ENCODE measurements at regions of chr2 and their contacts with region 1.

Region 1: GRCh38 chr2:216603010-216603883 is 30.0 kb upstream of the IGFBP2 start:
- DNase-seq: no peak
- ATAC-seq: no peak
- H3K4me3 ChIP-seq: no peak overlapping the region
- H3K27ac ChIP-seq: no peak overlapping the region
- H3K4me1 ChIP-seq: peaks cover 0 to 6% (median 0%) of the 10 kb centered on the region in 12 donors
- H3K27me3 ChIP-seq: peaks cover 0 to 2% (median 0%) of the 10 kb centered on the region in 9 donors
- CTCF ChIP-seq: no peak
- POLR2A ChIP-seq: no peak

Region 2: DNA sequence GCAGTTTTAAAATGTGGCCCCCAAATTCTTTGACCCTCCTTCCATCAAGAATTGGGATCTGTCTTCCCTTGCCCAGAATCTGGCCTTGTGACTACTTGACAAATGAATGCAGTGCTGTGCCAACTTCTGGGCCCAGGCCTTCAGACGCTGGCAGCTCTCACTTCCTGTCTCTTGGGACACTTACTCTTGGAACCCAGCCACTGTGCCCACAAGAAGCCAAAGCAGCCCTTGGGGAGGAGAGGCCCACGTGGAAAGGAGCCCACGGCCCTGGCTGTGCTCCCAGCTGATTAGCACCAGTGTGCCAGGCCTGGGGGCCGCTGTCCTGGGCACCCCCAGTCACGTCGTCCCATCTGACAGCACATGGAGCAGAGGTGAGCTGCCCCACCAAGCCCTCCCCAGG is 48.0 kb before region 1 on chr2:
- intact Hi-C with region 1: no loop called
- DNase-seq: peak; percentile 70 to 86 (median 78)
- ATAC-seq: peak; percentile 63 to 89 (median 86)
- H3K4me3 ChIP-seq: no peak overlapping the region
- H3K27ac ChIP-seq: peak overlapping the region in 10 of 12 donors; percentile 28 to 72 (median 64)
- H3K4me1 ChIP-seq: peaks cover 0 to 50% (median 23%) of the 10 kb centered on the region in 12 donors
- H3K27me3 ChIP-seq: no peaks in the 10 kb centered on the region
- CTCF ChIP-seq: no peak
- POLR2A ChIP-seq: no peak

Region 3: DNA sequence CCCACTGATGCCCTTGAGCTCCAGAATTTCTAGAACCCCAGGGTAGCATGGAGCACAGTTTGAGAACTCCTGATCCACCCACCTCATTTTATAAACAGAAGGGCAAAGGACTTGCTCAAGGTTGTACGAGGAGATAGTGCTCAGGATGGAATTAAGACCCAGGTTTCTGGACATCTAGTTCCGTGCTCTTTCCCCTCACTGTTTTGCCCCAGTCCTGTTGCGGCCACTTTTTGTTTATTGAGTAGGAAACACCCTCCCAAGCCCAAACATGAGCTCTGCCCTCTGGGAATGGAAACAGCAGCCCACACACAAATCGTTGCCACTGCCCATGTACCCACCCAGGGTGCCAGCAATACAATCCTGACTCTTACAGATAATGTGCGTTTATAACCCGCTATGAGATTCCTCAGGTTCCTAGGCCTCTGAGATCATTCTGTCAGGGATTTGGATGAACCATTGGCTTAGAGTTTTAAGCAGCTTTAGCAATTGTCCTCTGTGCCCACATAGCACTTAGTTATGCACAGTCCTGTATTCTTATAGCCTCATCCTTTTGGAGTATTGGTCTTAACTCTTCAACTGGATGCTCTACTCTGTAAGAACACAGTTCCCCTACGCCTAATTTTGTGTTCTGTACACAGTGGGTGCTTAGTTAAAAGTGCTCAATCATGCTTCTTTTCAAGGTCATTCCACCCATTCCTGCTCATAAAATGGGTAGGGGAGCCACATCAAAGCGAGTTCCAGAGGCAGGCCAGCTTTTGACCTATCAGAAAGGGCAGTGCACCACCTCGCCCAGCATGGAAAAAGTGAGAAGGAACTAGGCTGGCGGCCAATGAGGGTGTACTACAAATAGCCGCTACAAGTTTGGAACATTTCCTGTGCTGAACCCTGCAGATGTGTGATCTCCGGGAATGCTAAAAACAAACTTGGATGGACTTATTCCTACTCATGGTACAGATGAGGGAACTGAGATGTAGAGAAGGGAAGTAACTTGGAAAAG is 30.4 kb before region 1 on chr2:
- intact Hi-C with region 1: loop called in 1 of 10 experiments (anchors 5 kb)
- DNase-seq: peak; percentile 83 to 94 (median 92)
- ATAC-seq: peak; percentile 92 to 98 (median 94)
- H3K4me3 ChIP-seq: no peak overlapping the region
- H3K27ac ChIP-seq: peak overlapping the region; percentile 35 to 92 (median 86)
- H3K4me1 ChIP-seq: peaks cover 8 to 47% (median 20%) of the 10 kb centered on the region in 12 donors
- H3K27me3 ChIP-seq: no peaks in the 10 kb centered on the region
- CTCF ChIP-seq: no peak
- POLR2A ChIP-seq: no peak

Region 4: GRCh38 chr2:216657086-216657855 is 54.0 kb after region 1 on chr2:
- intact Hi-C with region 1: loop called in 1 of 10 experiments (anchors 5 kb)
- DNase-seq: no peak
- ATAC-seq: no peak
- H3K4me3 ChIP-seq: no peak overlapping the region
- H3K27ac ChIP-seq: no peak overlapping the region
- H3K4me1 ChIP-seq: peaks cover 0 to 14% (median 5%) of the 10 kb centered on the region in 12 donors
- H3K27me3 ChIP-seq: no peaks in the 10 kb centered on the region
- CTCF ChIP-seq: no peak
- POLR2A ChIP-seq: no peak